Activated CD8-positive, alpha-beta memory T cell treated with anti-CD3 and anti-CD28 coated beads, Interleukin-2, amount 10 ng/mL, durations not matched to agents 7 days and 5 days (primary cell): ENCODE measurements at regions of chr18 and their contacts with region 1.

Region 1: GRCh38 chr18:50819728-50820378 is at the start of gene MRO:
- DNase-seq: peak; percentile 84
- ATAC-seq: peak; percentile 99
- H3K4me3 Mint-ChIP-seq: no peak within 1 kb of the TSS
- H3K27ac Mint-ChIP-seq: no peak within 1 kb of the TSS
- H3K4me1 Mint-ChIP-seq: no peaks in the 10 kb centered on the region
- H3K27me3 Mint-ChIP-seq: peaks cover 18% of the 10 kb centered on the region
- total RNA-seq, gene MRO: not detected

Region 2: GRCh38 chr18:50836521-50836957 is 16.7 kb after region 1 on chr18:
- CTCF ChIA-PET with region 1: interaction called, 12 read pairs
- DNase-seq: no peak
- ATAC-seq: no peak
- H3K4me3 Mint-ChIP-seq: no peak overlapping the region
- H3K27ac Mint-ChIP-seq: no peak overlapping the region
- H3K4me1 Mint-ChIP-seq: peaks cover 3% of the 10 kb centered on the region
- H3K27me3 Mint-ChIP-seq: peaks cover 4% of the 10 kb centered on the region

Region 3: GRCh38 chr18:50849419-50849821 is 29.6 kb after region 1 on chr18:
- CTCF ChIA-PET with region 1: no interaction called
- DNase-seq: no peak
- ATAC-seq: no peak
- H3K4me3 Mint-ChIP-seq: no peak overlapping the region
- H3K27ac Mint-ChIP-seq: no peak overlapping the region
- H3K4me1 Mint-ChIP-seq: no peaks in the 10 kb centered on the region
- H3K27me3 Mint-ChIP-seq: peaks cover 7% of the 10 kb centered on the region

Region 4: DNA sequence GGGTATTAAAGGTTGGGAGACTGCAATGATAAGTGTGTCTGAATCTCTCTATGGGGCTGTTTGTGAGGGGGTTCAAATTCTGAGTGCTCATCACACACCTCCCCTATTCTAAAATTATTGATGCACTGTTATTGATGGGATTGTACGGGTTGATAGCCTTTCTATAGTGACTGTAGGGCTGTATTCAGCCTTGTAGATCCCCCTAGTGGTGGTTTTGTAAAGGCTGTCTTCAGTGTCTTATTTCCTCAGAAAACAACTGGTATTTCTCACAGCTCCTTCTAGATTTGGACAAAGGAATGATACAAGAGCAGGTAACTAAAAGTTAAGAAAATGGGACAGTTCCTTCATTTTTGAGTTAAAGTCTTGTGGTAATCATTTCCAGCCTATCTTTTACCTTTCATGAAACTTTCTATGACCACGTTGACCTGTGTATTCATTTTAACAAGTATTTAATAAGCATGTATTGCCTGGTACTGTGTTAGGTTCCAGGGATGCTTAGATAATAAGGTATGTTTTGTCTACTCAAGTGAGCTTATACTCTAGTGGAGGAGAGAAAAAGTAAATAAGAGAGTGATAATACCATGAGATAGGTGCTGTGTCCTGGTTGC is 231.4 kb after region 1 on chr18:
- CTCF ChIA-PET with region 1: interaction called, 20 read pairs
- DNase-seq: no peak
- ATAC-seq: peak; percentile 84
- H3K4me3 Mint-ChIP-seq: no peak overlapping the region
- H3K27ac Mint-ChIP-seq: peak overlapping the region; percentile 50
- H3K4me1 Mint-ChIP-seq: peaks cover 24% of the 10 kb centered on the region
- H3K27me3 Mint-ChIP-seq: no peaks in the 10 kb centered on the region